Naive thymus-derived CD4-positive, alpha-beta T cell (primary cell): ENCODE measurements at regions of chr4 and their contacts with region 1.

Region 1: DNA sequence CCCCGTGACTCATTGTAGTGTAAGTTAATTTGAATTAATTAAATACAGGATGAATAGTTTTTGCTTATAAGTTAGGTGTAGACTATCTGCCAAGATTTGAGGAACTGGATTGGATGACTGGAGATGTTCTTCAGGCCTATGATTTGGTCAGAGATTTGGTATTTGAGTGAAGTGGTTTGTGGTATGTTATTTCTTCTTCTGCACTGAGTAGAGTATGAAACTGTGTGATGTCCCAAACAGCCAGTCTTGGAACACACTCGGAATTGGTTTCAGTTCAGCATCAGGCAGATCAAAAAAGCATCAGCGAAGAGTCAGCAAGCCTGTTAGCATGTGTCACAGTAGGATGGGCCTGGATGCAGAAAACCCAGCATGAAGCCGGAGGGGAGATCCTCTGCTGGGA is 294.1 kb downstream of the ARHGAP10 start:
- DNase-seq: no peak
- ATAC-seq: no peak
- H3K4me3 ChIP-seq: no peak overlapping the region
- H3K4me3 Mint-ChIP-seq: no peak overlapping the region
- H3K27ac ChIP-seq: no peak overlapping the region
- H3K27ac Mint-ChIP-seq: peak overlapping the region in 3 of 9 donors; percentile 1 to 73 (median 38)
- H3K4me1 ChIP-seq: no peaks in the 10 kb centered on the region
- H3K4me1 Mint-ChIP-seq: peaks cover 0 to 6% (median 0%) of the 10 kb centered on the region in 7 donors
- H3K27me3 ChIP-seq: no peaks in the 10 kb centered on the region
- H3K27me3 Mint-ChIP-seq: no peaks in the 10 kb centered on the region

Region 2: DNA sequence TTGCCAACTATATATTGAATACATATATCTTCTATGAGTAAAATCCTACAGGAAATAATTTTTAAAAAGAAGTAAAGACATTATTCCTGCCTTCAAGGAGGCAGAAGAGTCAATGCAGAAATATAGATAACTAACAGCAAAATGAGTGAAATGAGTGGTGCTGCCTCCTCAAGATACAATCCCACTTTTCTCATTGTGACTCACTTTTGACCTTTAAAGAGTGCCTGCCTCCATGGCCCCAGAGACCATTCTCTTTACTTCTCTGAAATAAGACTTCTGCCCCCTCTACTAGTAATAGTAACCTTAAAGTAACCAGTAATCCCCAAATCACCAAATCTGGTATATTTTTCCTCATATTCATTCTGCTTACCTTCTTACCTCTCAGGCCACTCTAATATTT is 1519.7 kb before region 1 on chr4:
- CTCF ChIA-PET with region 1: no interaction called
- POLR2A ChIA-PET with region 1: no interaction called
- intact Hi-C with region 1: no loop called
- DNase-seq: no peak
- ATAC-seq: no peak
- H3K4me3 ChIP-seq: no peak overlapping the region
- H3K4me3 Mint-ChIP-seq: no peak overlapping the region
- H3K27ac ChIP-seq: no peak overlapping the region
- H3K27ac Mint-ChIP-seq: no peak overlapping the region
- H3K4me1 ChIP-seq: no peaks in the 10 kb centered on the region
- H3K4me1 Mint-ChIP-seq: peaks cover 0 to 7% (median 4%) of the 10 kb centered on the region in 7 donors
- H3K27me3 ChIP-seq: no peaks in the 10 kb centered on the region
- H3K27me3 Mint-ChIP-seq: no peaks in the 10 kb centered on the region

Region 3: DNA sequence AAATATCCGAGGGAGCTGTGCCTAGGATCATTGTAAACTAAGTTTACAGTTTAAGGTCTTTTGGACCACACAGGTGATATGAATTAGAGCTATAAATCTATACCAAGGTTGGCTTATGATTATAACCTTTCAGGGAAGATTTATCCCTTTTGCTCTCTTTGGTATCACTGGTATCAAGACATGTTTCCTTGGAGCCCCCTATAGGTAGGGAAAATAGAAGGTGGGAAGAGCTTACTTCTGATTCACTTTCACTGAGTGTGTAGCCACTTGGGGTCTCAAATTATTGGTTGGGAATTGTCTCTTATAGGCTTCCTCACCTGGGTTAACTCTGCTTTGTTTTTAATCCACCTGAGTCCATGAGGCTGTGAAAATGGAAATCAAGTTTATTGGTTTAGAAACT is 678.3 kb after region 1 on chr4:
- CTCF ChIA-PET with region 1: no interaction called
- POLR2A ChIA-PET with region 1: no interaction called
- intact Hi-C with region 1: loop called in 1 of 2 experiments (anchors 10 kb)
- DNase-seq: no peak
- ATAC-seq: no peak
- H3K4me3 ChIP-seq: no peak overlapping the region
- H3K4me3 Mint-ChIP-seq: no peak overlapping the region
- H3K27ac ChIP-seq: no peak overlapping the region
- H3K27ac Mint-ChIP-seq: no peak overlapping the region
- H3K4me1 ChIP-seq: no peaks in the 10 kb centered on the region
- H3K4me1 Mint-ChIP-seq: no peaks in the 10 kb centered on the region
- H3K27me3 ChIP-seq: peaks cover 0 to 4% of the 10 kb centered on the region in 2 donors
- H3K27me3 Mint-ChIP-seq: peaks cover 0 to 4% (median 0%) of the 10 kb centered on the region in 5 donors

Region 4: DNA sequence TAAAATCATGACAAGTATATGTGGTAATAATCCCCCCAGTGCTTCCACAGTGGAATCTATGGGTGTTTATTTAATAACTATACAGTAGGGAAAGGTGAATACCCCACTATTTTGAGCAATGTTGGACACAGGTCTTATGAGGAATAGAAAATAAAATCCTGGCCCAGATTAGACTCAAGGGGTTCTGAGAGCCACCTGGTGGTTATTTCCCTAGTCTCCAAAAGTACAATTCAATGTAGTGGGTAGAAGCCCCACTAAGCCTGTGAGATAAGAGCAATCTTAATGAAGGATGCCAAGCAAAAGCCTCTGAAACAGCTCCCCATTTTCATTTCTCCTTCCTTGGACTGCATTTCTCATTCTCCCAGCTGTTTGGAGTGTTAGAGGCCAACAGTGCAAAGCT is 744.4 kb after region 1 on chr4:
- CTCF ChIA-PET with region 1: interaction called, 3 read pairs
- POLR2A ChIA-PET with region 1: no interaction called
- intact Hi-C with region 1: loop called in 1 of 2 experiments (anchors 1 kb)
- DNase-seq: peak in 1 of 9 donors; percentile 1
- ATAC-seq: no peak
- H3K4me3 ChIP-seq: no peak overlapping the region
- H3K4me3 Mint-ChIP-seq: no peak overlapping the region
- H3K27ac ChIP-seq: no peak overlapping the region
- H3K27ac Mint-ChIP-seq: no peak overlapping the region
- H3K4me1 ChIP-seq: no peaks in the 10 kb centered on the region
- H3K4me1 Mint-ChIP-seq: no peaks in the 10 kb centered on the region
- H3K27me3 ChIP-seq: no peaks in the 10 kb centered on the region
- H3K27me3 Mint-ChIP-seq: no peaks in the 10 kb centered on the region